Activated naive CD4-positive, alpha-beta T cell treated with anti-CD3 and anti-CD28 coated beads for 36 hours (primary cell): ENCODE measurements at regions of chr2 and their contacts with region 1.

Region 1: DNA sequence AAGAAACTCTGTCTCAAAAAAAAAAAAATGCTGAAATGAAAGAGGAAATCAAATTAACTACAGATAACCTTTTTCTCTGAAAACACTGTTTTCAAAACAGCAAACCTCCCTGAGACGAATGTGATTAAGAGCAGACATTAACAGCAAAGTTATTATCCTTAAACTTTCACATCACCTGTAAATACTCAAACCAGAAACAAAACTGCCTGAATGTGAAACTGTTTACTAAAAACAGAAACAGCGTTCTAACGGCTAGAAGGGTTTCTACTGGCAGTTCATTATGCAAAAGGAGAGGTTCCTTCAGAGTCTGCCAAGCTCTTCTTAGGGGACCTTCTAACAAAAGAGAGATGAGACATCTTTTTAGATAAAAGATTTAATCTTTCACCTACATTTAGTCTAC is 45.9 kb downstream of the PNO1 start:
- DNase-seq: peak; percentile 16
- H3K4me3 Mint-ChIP-seq: peak overlapping the region; percentile 55
- H3K27ac Mint-ChIP-seq: peak overlapping the region; percentile 85
- H3K4me1 Mint-ChIP-seq: peaks cover 72% of the 10 kb centered on the region
- H3K27me3 Mint-ChIP-seq: no peaks in the 10 kb centered on the region

Region 2: DNA sequence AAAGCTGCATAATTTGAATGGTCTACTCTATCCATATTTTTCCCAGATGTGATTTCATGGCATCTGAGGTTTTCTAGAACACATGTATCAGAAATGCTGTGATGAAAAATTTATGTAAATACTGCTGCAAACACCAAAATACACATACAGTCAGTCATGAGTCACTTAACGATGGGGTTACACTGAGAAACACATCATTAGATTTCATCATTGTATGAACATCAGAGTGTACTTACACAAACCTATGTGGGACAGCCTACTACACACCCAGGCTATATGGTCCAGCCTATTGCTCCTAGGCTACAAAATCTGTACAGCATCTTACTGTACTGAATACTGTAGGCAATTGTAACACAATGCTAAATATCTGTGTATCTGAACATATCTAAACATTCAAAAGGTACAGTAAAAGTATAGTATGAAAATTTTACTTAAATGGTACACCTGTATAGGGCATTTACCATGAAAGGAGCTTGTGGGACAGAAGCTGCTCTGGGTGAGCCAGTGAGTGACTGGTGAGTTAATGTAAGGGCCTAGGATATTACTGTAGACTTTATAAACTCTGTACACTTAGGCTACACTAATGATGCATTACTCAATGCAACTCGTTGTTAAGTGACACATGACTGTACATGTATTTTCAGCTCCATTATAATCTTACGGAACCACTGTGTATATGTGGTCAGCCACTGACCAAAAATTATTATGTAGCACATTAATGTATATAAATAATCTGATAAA is 12.4 kb before region 1 on chr2:
- CTCF ChIA-PET with region 1: interaction called, 5 read pairs
- intact Hi-C with region 1: loop called (anchors 1 kb)
- DNase-seq: no peak
- H3K4me3 Mint-ChIP-seq: no peak overlapping the region
- H3K27ac Mint-ChIP-seq: peak overlapping the region; percentile 43
- H3K4me1 Mint-ChIP-seq: peaks cover 65% of the 10 kb centered on the region
- H3K27me3 Mint-ChIP-seq: no peaks in the 10 kb centered on the region

Region 3: DNA sequence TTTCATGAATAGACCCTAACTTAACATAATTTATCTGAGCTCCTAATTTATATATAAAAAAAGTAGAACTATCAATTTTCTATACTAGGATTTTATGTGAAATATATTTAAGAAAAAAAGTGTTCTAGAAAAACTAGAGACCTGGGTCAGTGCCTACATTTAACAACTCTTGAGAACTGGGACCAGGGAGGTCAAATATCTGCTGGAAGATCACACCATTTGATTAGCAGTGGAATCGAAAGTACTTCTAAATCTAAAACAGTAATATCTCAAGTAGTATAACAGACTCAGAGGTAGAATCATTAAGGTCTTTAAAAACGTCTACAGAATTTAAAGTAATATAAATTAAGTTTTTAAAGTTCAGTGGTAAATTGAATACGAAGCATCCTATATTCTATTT is 14.1 kb after region 1 on chr2:
- CTCF ChIA-PET with region 1: interaction called, 3 read pairs
- intact Hi-C with region 1: loop called (anchors 2 kb)
- DNase-seq: no peak
- H3K4me3 Mint-ChIP-seq: no peak overlapping the region
- H3K27ac Mint-ChIP-seq: no peak overlapping the region
- H3K4me1 Mint-ChIP-seq: peaks cover 79% of the 10 kb centered on the region
- H3K27me3 Mint-ChIP-seq: no peaks in the 10 kb centered on the region